ENCODE measurements at regions of chr18 and their contacts with region 1.

Region 1: GRCh38 chr18:55422456-55423180 is 165.4 kb downstream of the TCF4 start:
- DNase-seq: peak; percentile 53
- ATAC-seq: no peak
- H3K4me3 ChIP-seq: peak overlapping the region; percentile 43
- H3K27ac ChIP-seq: peak overlapping the region; percentile 78
- H3K4me1 ChIP-seq: peaks cover 12% of the 10 kb centered on the region; the same call in 1 of the 2 replicates
- H3K27me3 ChIP-seq: no peaks in the 10 kb centered on the region
- CTCF ChIP-seq: no peak
- POLR2A ChIP-seq: no peak
- RAD21 ChIP-seq: no peak

Region 2: GRCh38 chr18:55500316-55501086 is 77.9 kb after region 1 on chr18:
- CTCF ChIA-PET with region 1: no interaction called
- POLR2A ChIA-PET with region 1: no interaction called
- dilution Hi-C with region 1: no loop called
- in situ Hi-C with region 1: no loop called
- intact Hi-C with region 1: loop called (anchors 5 kb)
- DNase-seq: peak; percentile 92
- ATAC-seq: peak; percentile 85
- H3K4me3 ChIP-seq: peak overlapping the region; percentile 26; the same call in 1 of the 2 replicates
- H3K27ac ChIP-seq: peak overlapping the region; percentile 52
- H3K4me1 ChIP-seq: peaks cover 16% of the 10 kb centered on the region
- H3K27me3 ChIP-seq: no peaks in the 10 kb centered on the region
- CTCF ChIP-seq: no peak
- POLR2A ChIP-seq: no peak; the same call in none of the 2 replicates
- RAD21 ChIP-seq: no peak; the same call in 1 of the 2 replicates

Measured in IMR-90 (cell line).